ENCODE measurements at regions of chr11 and their contacts with region 1.

Region 1: GRCh38 chr11:116366980-116367645 is 405.7 kb downstream of the BUD13 start:
- DNase-seq: peak; percentile 76 to 87
- H3K4me3 ChIP-seq: no peak overlapping the region
- H3K4me3 Mint-ChIP-seq: no peak overlapping the region
- H3K27ac Mint-ChIP-seq: peak overlapping the region; percentile 43
- H3K4me1 ChIP-seq: peaks cover 13% of the 10 kb centered on the region
- H3K4me1 Mint-ChIP-seq: peaks cover 11% of the 10 kb centered on the region
- H3K27me3 ChIP-seq: no peaks in the 10 kb centered on the region
- H3K27me3 Mint-ChIP-seq: peaks cover 3% of the 10 kb centered on the region
- CTCF ChIP-seq: no peak

Region 2: GRCh38 chr11:116300253-116300652 is 66.9 kb before region 1 on chr11:
- CTCF ChIA-PET with region 1: no interaction called
- POLR2A ChIA-PET with region 1: no interaction called
- intact Hi-C with region 1: loop called (anchors 5 kb)
- DNase-seq: no peak
- H3K4me3 ChIP-seq: no peak overlapping the region
- H3K4me3 Mint-ChIP-seq: no peak overlapping the region
- H3K27ac Mint-ChIP-seq: no peak overlapping the region
- H3K4me1 ChIP-seq: peaks cover 29% of the 10 kb centered on the region
- H3K4me1 Mint-ChIP-seq: peaks cover 13% of the 10 kb centered on the region
- H3K27me3 ChIP-seq: no peaks in the 10 kb centered on the region
- H3K27me3 Mint-ChIP-seq: no peaks in the 10 kb centered on the region
- CTCF ChIP-seq: no peak

Region 3: GRCh38 chr11:116397602-116398084 is 30.5 kb after region 1 on chr11:
- CTCF ChIA-PET with region 1: no interaction called
- POLR2A ChIA-PET with region 1: no interaction called
- intact Hi-C with region 1: loop called (anchors 2 kb)
- DNase-seq: no peak
- H3K4me3 ChIP-seq: no peak overlapping the region
- H3K4me3 Mint-ChIP-seq: no peak overlapping the region
- H3K27ac Mint-ChIP-seq: no peak overlapping the region
- H3K4me1 ChIP-seq: peaks cover 3% of the 10 kb centered on the region; the same call in 1 of the 2 replicates
- H3K4me1 Mint-ChIP-seq: no peaks in the 10 kb centered on the region
- H3K27me3 ChIP-seq: no peaks in the 10 kb centered on the region
- H3K27me3 Mint-ChIP-seq: peaks cover 2% of the 10 kb centered on the region
- CTCF ChIP-seq: no peak

Measured in Caco-2 (cell line).